Breast epithelium (tissue), 4 donors: ENCODE measurements at regions of chr3 and their contacts with region 1.

Region 1: GRCh38 chr3:13405614-13406013 is 14.5 kb downstream of the NUP210 start:
- DNase-seq: no peak
- H3K4me3 ChIP-seq: no peak overlapping the region
- H3K27ac ChIP-seq: no peak overlapping the region
- H3K4me1 ChIP-seq: no peaks in the 10 kb centered on the region
- H3K27me3 ChIP-seq: no peaks in the 10 kb centered on the region
- CTCF ChIP-seq: no peak
- POLR2A ChIP-seq: no peak

Region 2: DNA sequence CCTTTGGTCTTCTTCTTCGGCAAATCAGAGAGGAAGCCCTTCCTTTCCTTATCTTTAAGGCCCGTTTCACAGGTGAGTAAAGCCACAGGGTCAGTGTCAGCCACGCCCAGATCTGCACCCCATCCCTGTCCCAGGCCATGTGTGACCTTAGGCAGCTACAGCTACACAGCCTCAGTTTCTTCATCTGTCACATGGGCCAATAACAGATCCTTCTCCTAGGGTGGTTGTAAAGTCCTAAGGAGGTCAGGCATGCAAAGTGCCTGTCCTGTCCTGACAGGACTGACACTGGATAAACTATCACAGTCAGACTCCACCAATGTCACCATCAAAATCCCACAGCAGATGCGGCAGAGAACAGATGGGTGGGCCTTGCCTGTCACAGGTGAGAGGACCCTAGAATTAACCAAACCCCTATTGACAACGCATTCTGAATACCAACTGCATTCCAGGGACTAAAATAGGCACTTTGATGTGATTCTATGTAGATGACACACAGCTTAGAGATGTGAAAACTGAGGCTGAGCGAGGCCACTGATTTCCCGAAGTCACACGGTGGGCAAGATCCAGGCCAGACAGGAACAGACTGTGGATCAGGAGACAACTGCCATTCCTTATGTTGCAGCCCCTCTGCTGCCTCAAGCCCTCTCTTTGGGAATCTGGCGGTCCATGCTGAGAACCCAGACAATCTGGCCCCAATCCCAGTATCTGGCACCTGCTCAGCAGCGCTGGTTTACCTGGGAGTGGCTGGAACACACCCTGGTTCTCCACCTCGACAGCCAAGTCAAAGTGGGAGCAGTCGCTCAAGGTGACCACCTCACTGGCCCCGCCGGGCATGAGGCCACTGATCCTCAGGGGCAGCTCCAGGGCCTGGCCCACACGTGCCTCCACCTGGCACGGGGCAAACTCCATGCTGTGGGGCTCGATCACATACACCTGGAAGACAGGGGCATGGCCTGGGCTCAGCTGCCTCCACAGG is 34.2 kb before region 1 on chr3:
- intact Hi-C with region 1: loop called (anchors 2 kb)
- DNase-seq: no peak
- H3K4me3 ChIP-seq: no peak overlapping the region
- H3K27ac ChIP-seq: no peak overlapping the region
- H3K4me1 ChIP-seq: no peaks in the 10 kb centered on the region
- H3K27me3 ChIP-seq: no peaks in the 10 kb centered on the region
- CTCF ChIP-seq: no peak
- POLR2A ChIP-seq: no peak

Region 3: DNA sequence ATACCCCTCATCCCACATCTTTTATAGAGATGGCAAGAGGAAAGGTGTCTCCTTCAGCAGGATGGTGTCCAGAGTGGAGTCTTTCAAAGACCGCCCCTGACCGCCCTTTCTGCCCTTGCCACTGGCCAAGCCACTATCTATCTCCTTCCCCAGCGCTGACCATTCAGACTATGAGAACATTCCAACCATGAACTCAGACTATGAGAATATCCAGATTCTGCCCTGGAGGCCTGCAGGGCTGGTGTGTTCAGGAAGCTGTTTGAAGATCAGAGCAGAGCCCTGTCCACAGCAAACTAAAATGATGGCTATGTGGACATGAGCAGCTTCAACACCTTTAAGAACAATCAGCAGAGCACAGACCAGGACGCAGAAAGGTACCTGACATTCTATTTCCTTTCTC is 531.5 kb after region 1 on chr3:
- intact Hi-C with region 1: no loop called
- DNase-seq: no peak
- H3K4me3 ChIP-seq: no peak overlapping the region
- H3K27ac ChIP-seq: no peak overlapping the region
- H3K4me1 ChIP-seq: no peaks in the 10 kb centered on the region
- H3K27me3 ChIP-seq: peaks cover 0 to 7% of the 10 kb centered on the region in 2 donors
- CTCF ChIP-seq: no peak
- POLR2A ChIP-seq: no peak